GM10248 (cell line): ENCODE measurements at regions of chr5 and their contacts with region 1.

Region 1: DNA sequence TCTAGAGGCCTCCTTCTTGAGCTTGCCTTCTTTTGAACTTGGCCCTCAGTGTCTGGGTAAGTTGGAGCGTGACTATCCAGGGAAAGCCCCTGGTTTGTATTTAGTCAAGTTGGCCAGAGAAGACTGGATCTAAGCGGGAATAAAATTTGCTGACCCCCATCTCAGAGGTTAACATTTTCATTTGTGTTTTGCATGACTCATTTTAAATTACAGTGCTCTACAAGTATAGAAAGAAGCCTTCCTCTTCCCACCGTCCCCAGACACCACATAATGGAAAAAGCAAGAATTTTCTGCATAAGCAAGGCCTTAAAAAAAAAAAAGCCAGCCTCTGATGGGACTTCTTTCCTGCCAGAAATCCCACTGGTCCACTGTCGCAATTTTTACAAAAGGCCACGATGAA is 27.2 kb downstream of the PIK3R1 start:
- DNase-seq: no peak
- CTCF ChIP-seq: no peak

Region 2: DNA sequence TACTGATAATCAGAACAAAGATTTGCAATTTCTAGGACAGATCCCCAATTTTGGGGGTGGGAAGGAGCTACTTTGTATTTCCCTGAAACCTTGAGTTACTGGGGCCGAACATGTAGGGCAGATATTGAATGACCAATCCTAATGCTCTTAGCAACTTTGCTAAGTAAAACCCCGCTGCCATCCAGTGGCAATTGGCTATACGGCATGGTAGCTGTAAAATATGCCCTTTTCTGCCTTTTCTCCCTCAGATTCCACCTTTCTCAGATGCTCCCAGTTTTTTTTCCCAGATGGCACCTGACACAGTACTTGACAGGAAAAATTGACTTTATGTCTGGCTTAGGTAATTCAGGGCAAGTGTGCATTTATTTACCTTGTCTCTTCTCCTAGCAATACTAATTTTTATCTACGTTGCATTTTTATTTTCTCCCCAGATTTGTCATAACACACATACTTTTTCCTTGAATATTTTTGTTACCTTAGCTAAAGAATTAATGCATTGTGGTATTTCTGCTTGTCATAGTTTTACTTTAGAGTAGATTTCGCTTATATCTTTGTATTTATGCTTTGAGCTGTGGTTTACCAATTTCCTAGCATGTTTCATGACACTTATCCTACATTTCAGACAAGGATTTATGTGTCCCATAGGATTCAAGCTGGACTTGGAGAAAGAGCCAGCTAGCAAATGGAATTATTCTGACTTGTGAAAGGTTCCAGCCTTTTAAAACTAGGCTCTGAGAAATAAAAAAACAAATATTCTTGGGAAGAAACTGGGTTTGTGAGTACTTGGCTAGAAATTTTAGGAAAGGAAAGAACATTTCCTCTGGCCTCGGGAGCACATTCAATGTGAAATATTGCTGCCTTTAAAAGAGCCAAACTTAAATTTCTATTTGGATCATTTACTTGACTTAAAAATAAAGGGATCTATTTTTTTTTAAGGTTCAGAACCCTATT is 10.2 kb after region 1 on chr5:
- CTCF ChIA-PET with region 1: interaction called, 12 read pairs
- POLR2A ChIA-PET with region 1: no interaction called
- DNase-seq: peak; percentile 49
- CTCF ChIP-seq: peak; percentile 74

Region 3: GRCh38 chr5:68264024-68264956 is 21.5 kb after region 1 on chr5:
- CTCF ChIA-PET with region 1: no interaction called
- POLR2A ChIA-PET with region 1: no interaction called
- DNase-seq: no peak
- CTCF ChIP-seq: no peak

Region 4: DNA sequence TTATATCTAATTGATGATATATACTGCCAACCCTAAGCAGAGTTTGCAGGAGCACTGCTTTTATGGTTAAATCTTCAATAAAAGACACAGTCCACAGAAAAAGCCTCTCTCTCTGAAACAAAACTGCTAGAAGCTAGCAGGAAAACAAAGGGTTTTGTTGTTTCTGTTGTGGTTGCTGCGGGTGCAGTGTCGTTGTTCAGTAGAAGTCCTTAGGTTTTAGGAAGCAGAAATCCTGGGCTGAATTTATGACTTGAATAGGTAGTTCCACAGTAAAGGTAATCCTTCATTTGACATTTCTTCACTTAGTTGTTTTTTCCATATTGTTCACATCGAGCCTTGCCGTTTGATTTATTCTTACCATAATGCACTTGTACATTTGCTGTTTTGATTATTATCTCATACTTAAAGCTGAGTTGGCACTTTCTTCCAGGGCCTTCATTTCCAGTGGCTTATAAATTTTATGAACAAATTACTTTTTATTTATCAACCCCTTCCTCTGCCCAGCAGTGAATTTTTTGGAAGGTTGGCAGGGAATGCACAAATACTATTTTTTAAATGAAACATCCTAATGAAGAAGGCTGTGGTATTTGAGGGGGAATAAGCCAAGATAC is 641.5 kb after region 1 on chr5:
- CTCF ChIA-PET with region 1: no interaction called
- POLR2A ChIA-PET with region 1: no interaction called
- DNase-seq: no peak
- CTCF ChIP-seq: no peak